Right cardiac atrium (tissue), 5 donors: ENCODE measurements at regions of chr2 and their contacts with region 1.

Region 1: DNA sequence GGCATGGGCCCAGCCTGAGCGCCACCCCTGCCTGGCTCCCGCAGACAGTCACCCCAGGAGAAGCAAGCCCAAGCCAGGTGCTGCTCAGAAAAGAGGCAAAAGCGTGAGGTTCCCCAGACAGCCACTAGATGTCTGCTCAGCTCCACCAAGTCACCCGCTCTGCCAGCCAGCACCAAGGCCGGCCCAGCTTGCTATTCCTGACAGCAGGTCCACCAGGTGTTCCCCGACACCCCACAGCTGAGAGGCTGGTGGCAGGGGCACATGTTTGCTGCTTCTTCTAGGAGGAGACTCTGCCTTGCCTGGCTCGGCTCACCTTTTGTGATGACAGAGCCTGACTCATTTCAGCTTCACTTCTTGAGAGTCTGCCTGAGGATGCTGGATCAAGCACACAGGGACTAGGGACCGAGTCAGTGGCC is 206.7 kb downstream of the MGAT5 start:
- DNase-seq: peak; percentile 49 to 81 (median 73)
- ATAC-seq: peak; percentile 65 to 69
- H3K4me3 ChIP-seq: no peak overlapping the region
- H3K27ac ChIP-seq: no peak overlapping the region
- H3K4me1 ChIP-seq: no peaks in the 10 kb centered on the region
- H3K27me3 ChIP-seq: no peaks in the 10 kb centered on the region

Region 2: GRCh38 chr2:134002391-134002790 is 458.2 kb before region 1 on chr2:
- intact Hi-C with region 1: no loop called
- DNase-seq: no peak
- ATAC-seq: no peak
- H3K4me3 ChIP-seq: no peak overlapping the region
- H3K27ac ChIP-seq: no peak overlapping the region
- H3K4me1 ChIP-seq: no peaks in the 10 kb centered on the region
- H3K27me3 ChIP-seq: no peaks in the 10 kb centered on the region

Region 3: GRCh38 chr2:134619250-134619649 is 158.7 kb after region 1 on chr2:
- intact Hi-C with region 1: no loop called
- DNase-seq: no peak
- ATAC-seq: no peak
- H3K4me3 ChIP-seq: no peak overlapping the region
- H3K27ac ChIP-seq: no peak overlapping the region
- H3K4me1 ChIP-seq: no peaks in the 10 kb centered on the region
- H3K27me3 ChIP-seq: no peaks in the 10 kb centered on the region

Region 4: DNA sequence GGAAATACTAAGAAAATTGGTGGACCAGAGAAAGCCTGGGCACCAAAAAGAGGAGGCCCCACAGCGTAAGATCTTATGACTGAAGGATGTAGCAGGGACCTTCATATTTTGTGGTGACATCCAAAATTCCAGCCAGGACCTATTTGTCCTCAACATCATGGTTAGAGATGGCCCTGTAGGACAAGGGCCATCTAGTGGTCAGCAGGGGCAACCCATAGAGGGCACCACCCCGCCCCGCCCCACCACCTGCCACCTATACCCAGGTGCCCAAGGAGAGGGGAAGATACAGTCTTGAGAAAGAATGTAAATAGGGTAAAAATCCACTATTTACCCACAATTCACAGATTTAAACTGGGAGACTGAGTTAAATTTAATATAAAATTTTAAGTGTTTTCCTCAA is 317.8 kb after region 1 on chr2:
- intact Hi-C with region 1: loop called in 2 of 4 experiments (anchors 5 to 10 kb)
- DNase-seq: peak in 1 of 3 donors; percentile 50
- ATAC-seq: peak in 1 of 2 donors; percentile 39
- H3K4me3 ChIP-seq: no peak overlapping the region
- H3K27ac ChIP-seq: no peak overlapping the region
- H3K4me1 ChIP-seq: peaks cover 13% of the 10 kb centered on the region
- H3K27me3 ChIP-seq: no peaks in the 10 kb centered on the region

Region 5: GRCh38 chr2:134897932-134898331 is 437.3 kb after region 1 on chr2:
- intact Hi-C with region 1: loop called (anchors 5 to 10 kb)
- DNase-seq: no peak
- ATAC-seq: no peak
- H3K4me3 ChIP-seq: no peak overlapping the region
- H3K27ac ChIP-seq: no peak overlapping the region
- H3K4me1 ChIP-seq: no peaks in the 10 kb centered on the region
- H3K27me3 ChIP-seq: no peaks in the 10 kb centered on the region